ENCODE measurements at regions of chr7 and their contacts with region 1.

Region 1: DNA sequence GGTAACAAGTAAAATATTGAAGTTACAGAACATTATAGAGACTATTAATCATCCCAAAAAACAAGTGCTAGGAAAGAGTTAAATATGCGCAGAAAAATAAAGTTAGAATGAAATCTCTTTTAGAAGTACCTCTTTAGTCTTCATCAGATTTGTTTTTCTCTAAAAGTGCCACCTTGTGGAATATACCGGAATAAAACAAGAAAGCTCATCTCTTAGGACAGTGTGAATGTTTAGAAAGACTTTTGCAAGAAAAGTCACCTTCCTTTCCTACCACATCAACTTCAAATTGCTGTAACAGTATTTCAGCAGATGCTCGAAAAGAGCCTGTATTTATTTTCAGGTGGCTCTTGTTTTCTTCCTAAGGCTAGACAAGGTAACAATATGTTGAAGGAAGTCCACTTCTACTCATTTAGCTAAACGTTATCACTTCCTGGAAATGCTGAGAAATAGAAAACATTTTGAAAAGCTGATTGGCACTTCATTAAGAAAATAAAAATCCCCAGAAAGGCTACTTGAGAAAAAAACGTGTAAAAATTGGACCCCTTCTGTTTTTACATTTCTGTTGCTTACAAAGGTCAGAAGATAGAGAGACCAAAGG is 19.8 kb upstream of the FAM133B start:
- DNase-seq: no peak
- H3K4me3 ChIP-seq: no peak overlapping the region
- H3K27ac ChIP-seq: no peak overlapping the region
- H3K4me1 ChIP-seq: peaks cover 0 to 20% (median 5%) of the 10 kb centered on the region in 4 donors
- H3K27me3 ChIP-seq: no peaks in the 10 kb centered on the region
- CTCF ChIP-seq: peak; percentile 39 to 44

Region 2: DNA sequence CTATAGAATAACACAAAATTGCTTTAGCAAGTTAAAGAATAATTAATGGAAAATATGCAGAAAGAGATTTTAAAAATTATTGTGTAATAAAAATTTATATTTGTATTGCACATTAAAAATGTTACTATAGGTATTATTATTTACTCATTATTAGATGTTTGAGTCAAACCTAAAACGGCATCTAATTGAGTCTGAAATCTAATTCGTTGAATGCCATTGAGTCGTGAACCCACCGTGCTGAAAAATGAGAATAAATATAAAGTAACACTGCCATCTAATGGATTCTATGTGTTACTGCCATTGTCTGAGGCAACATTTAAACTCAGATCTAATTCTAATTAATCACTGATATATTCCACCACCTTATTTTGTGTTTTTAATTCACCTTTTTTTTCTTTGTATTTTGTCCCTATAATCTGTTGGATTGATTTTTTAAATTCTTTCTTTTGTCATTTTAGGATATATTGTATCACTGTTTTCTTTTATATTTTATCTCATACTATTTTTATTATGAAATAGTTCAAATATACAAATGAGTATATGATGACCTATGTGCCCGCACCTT is 445.6 kb after region 1 on chr7:
- intact Hi-C with region 1: loop called (anchors 10 kb)
- DNase-seq: no peak
- H3K4me3 ChIP-seq: no peak overlapping the region
- H3K27ac ChIP-seq: no peak overlapping the region
- H3K4me1 ChIP-seq: no peaks in the 10 kb centered on the region
- H3K27me3 ChIP-seq: peaks cover 0 to under 1% of the 10 kb centered on the region in 2 donors
- CTCF ChIP-seq: peak; percentile 74 to 77